ENCODE measurements at regions of chr20 and their contacts with region 1.

Region 1: DNA sequence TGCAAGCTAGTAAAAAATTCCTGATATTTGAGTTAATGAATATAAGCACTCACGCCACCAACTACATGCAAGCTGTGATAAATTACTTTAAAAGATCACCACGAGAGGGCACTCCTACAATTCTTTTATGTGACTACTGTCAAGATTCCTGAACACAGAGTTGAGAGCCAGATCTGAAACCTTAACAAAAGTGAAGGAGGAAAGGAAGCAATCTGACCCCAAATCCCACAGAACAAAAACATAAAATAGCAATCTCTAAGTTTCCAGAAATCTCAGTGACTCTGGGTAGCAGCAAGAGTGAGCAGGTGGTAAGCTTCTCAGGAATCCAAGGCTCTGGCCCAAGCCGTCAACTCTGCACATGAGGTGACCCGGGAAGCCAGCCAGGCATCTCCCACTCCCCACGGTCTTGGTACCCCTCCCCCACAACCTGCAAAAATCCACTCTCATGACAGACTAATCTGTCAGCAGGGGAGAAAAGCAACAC is 55.1 kb downstream of the STAU1 start:
- DNase-seq: peak; percentile 83
- ATAC-seq: peak; percentile 75
- H3K4me3 ChIP-seq: no peak overlapping the region
- H3K27ac ChIP-seq: no peak overlapping the region
- H3K4me1 ChIP-seq: peaks cover 13% of the 10 kb centered on the region; the same call in 1 of the 2 replicates
- H3K27me3 ChIP-seq: no peaks in the 10 kb centered on the region
- CTCF ChIP-seq: peak; percentile 72
- EP300 ChIP-seq: no peak
- POLR2A ChIP-seq: no peak
- RAD21 ChIP-seq: peak; percentile 83

Region 2: GRCh38 chr20:49207076-49207475 is 74.0 kb after region 1 on chr20:
- CTCF ChIA-PET with region 1: interaction called, 18 read pairs
- POLR2A ChIA-PET with region 1: no interaction called
- in situ Hi-C with region 1: no loop called
- intact Hi-C with region 1: loop called (anchors 1 kb)
- DNase-seq: peak; percentile 76
- ATAC-seq: peak; percentile 98
- H3K4me3 ChIP-seq: no peak overlapping the region; a peak in 1 of 6 replicates
- H3K27ac ChIP-seq: no peak overlapping the region
- H3K4me1 ChIP-seq: 0 out of 2 replicates have a peak, but pooled peaks cover 12% of the 10 kb centered on the region
- H3K27me3 ChIP-seq: no peaks in the 10 kb centered on the region
- CTCF ChIP-seq: peak; percentile 94
- EP300 ChIP-seq: no peak
- POLR2A ChIP-seq: no peak
- RAD21 ChIP-seq: peak; percentile 65; the same call in 1 of the 2 replicates